ENCODE measurements at regions of chr11 and their contacts with region 1.

Region 1: DNA sequence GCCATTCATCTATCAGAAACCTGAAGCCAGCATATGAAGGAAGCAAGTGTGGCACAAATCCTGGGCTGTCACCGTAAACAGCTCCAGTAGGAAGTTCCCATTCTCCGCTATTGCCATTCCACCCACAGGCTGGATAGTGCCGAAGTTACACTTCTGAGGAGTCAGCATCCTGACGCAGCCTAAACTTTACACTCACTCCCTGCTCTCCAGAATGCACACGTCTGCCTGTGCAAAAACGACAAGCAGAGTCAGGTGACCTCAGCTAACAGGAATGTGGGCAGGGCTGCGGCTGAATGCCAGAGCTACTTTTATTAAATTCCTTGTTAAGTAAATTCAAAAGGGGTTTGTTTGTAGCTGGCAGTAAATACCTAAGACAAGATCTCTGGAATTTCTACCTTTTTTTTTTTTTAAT is 33.7 kb downstream of the NFRKB start:
- DNase-seq: no peak
- H3K4me3 ChIP-seq: no peak overlapping the region
- H3K4me3 Mint-ChIP-seq: peak overlapping the region in 4 of 8 donors; percentile 16 to 72 (median 32)
- H3K27ac ChIP-seq: no peak overlapping the region
- H3K27ac Mint-ChIP-seq: peak overlapping the region; percentile 83 to 96 (median 93)
- H3K4me1 ChIP-seq: peaks cover 59% of the 10 kb centered on the region
- H3K4me1 Mint-ChIP-seq: peaks cover 28 to 55% (median 43%) of the 10 kb centered on the region in 4 donors
- H3K27me3 ChIP-seq: no peaks in the 10 kb centered on the region
- H3K27me3 Mint-ChIP-seq: no peaks in the 10 kb centered on the region

Region 2: DNA sequence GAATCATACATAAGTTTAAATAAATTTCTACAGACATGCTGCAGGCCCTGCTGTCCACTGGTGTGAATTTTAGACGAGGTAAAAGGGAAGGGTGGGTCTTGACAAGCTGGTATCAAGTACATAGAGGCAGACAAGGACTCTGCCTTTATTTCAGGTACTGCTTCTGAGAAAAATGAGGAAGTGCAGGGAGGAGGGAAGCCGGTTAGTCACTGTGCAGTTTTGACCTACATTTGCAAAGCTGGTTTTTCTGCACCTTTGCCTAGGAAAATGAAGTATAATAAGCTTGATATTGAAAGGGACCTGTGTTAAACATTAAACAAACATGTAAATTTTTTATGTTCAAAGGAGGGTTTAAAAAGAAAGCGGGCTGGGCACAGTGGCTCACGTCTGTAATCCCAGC is 21.5 kb before region 1 on chr11:
- CTCF ChIA-PET with region 1: interaction called, 3 read pairs
- POLR2A ChIA-PET with region 1: interaction called, 26 read pairs
- intact Hi-C with region 1: no loop called
- DNase-seq: no peak
- H3K4me3 ChIP-seq: no peak overlapping the region
- H3K4me3 Mint-ChIP-seq: peak overlapping the region in 6 of 8 donors; percentile 33 to 78 (median 60)
- H3K27ac ChIP-seq: no peak overlapping the region
- H3K27ac Mint-ChIP-seq: peak overlapping the region in 6 of 7 donors; percentile 11 to 89 (median 55)
- H3K4me1 ChIP-seq: peaks cover 45% of the 10 kb centered on the region
- H3K4me1 Mint-ChIP-seq: peaks cover 27 to 65% (median 38%) of the 10 kb centered on the region in 4 donors
- H3K27me3 ChIP-seq: no peaks in the 10 kb centered on the region
- H3K27me3 Mint-ChIP-seq: no peaks in the 10 kb centered on the region

Region 3: GRCh38 chr11:129846501-129847335 is 15.0 kb before region 1 on chr11:
- CTCF ChIA-PET with region 1: interaction called, 3 read pairs
- POLR2A ChIA-PET with region 1: interaction called, 26 read pairs
- intact Hi-C with region 1: no loop called
- DNase-seq: peak; percentile 55 to 79 (median 72)
- H3K4me3 ChIP-seq: peak overlapping the region in 1 of 2 donors; percentile 6
- H3K4me3 Mint-ChIP-seq: peak overlapping the region in 7 of 8 donors; percentile 37 to 81 (median 70)
- H3K27ac ChIP-seq: no peak overlapping the region
- H3K27ac Mint-ChIP-seq: peak overlapping the region; percentile 67 to 97 (median 94)
- H3K4me1 ChIP-seq: peaks cover 34% of the 10 kb centered on the region
- H3K4me1 Mint-ChIP-seq: peaks cover 21 to 44% (median 33%) of the 10 kb centered on the region in 4 donors
- H3K27me3 ChIP-seq: no peaks in the 10 kb centered on the region
- H3K27me3 Mint-ChIP-seq: no peaks in the 10 kb centered on the region

Measured in CD4-positive, alpha-beta memory T cell (primary cell).